Mammary epithelial cell (primary cell): ENCODE measurements at regions of chr7 and their contacts with region 1.

Region 1: GRCh38 chr7:82164813-82165212 is 278.8 kb downstream of the CACNA2D1 start:
- DNase-seq: peak; percentile 6
- H3K4me3 ChIP-seq: no peak overlapping the region
- H3K27ac ChIP-seq: no peak overlapping the region
- H3K4me1 ChIP-seq: no peaks in the 10 kb centered on the region
- H3K27me3 ChIP-seq: peaks cover 2% of the 10 kb centered on the region
- CTCF ChIP-seq: peak; percentile 27 to 49

Region 2: GRCh38 chr7:82572195-82572880 is 407.5 kb after region 1 on chr7:
- CTCF ChIA-PET with region 1: no interaction called
- dilution Hi-C with region 1: no loop called
- in situ Hi-C with region 1: no loop called
- intact Hi-C with region 1: loop called (anchors 5 kb)
- DNase-seq: peak; percentile 60
- H3K4me3 ChIP-seq: no peak overlapping the region
- H3K27ac ChIP-seq: no peak overlapping the region
- H3K4me1 ChIP-seq: no peaks in the 10 kb centered on the region
- H3K27me3 ChIP-seq: no peaks in the 10 kb centered on the region
- CTCF ChIP-seq: peak; percentile 85 to 95